Right cardiac atrium (tissue), 5 donors: ENCODE measurements at regions of chr17 and their contacts with region 1.

Region 1: GRCh38 chr17:82351716-82352488 is 7.1 kb upstream of the TEX19 start:
- DNase-seq: peak; percentile 85 to 93 (median 86)
- ATAC-seq: peak; percentile 72 to 87
- H3K4me3 ChIP-seq: no peak overlapping the region
- H3K27ac ChIP-seq: no peak overlapping the region
- H3K4me1 ChIP-seq: no peaks in the 10 kb centered on the region
- H3K27me3 ChIP-seq: no peaks in the 10 kb centered on the region

Region 2: DNA sequence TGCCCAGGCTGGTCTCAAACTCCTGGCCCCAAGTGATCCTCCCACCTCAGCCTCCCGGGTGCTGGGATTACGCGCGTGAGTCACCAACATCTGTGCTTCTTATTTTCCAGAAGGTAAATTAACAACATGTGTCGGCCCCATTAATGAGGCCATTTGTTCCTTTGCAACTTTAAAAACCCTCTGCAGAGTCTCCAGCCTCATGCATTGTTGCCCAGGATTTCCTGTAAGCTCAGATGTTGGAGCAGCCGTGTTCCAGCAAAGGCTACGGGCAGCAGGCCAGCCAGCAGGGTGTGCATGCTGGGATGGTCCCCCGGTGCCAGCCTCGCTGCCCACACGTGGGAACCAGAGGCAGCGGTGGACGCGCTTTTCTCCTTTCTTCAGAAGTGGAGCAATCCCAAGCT is 47.1 kb after region 1 on chr17:
- intact Hi-C with region 1: no loop called
- DNase-seq: peak in 2 of 3 donors; percentile 66 to 70
- ATAC-seq: no peak
- H3K4me3 ChIP-seq: no peak overlapping the region
- H3K27ac ChIP-seq: no peak overlapping the region
- H3K4me1 ChIP-seq: no peaks in the 10 kb centered on the region
- H3K27me3 ChIP-seq: no peaks in the 10 kb centered on the region

Region 3: GRCh38 chr17:82418001-82418986 is 66.4 kb after region 1 on chr17 and contains the starts of genes HEXD and OGFOD3:
- intact Hi-C with region 1: loop called in 3 of 4 experiments (anchors 1 to 10 kb)
- DNase-seq: peak; percentile 84 to 95 (median 94)
- ATAC-seq: peak; percentile 94 to 95
- H3K4me3 ChIP-seq: peak within 1 kb of the TSS; percentile 68
- H3K27ac ChIP-seq: peak within 1 kb of the TSS; percentile 83
- H3K4me1 ChIP-seq: peaks cover 3% of the 10 kb centered on the region
- H3K27me3 ChIP-seq: no peaks in the 10 kb centered on the region
- total RNA-seq, gene HEXD: 13.6 to 24.4 (median 18.7) TPM
- total RNA-seq, gene OGFOD3: 27.9 to 34.0 (median 30.5) TPM

Region 4: GRCh38 chr17:82551779-82552457 is 200.0 kb after region 1 on chr17:
- intact Hi-C with region 1: loop called in 3 of 4 experiments (anchors 2 to 10 kb)
- DNase-seq: peak; percentile 74 to 90 (median 88)
- ATAC-seq: peak; percentile 79 to 86
- H3K4me3 ChIP-seq: no peak overlapping the region
- H3K27ac ChIP-seq: peak overlapping the region; percentile 7
- H3K4me1 ChIP-seq: peaks cover 18% of the 10 kb centered on the region
- H3K27me3 ChIP-seq: no peaks in the 10 kb centered on the region

Region 5: DNA sequence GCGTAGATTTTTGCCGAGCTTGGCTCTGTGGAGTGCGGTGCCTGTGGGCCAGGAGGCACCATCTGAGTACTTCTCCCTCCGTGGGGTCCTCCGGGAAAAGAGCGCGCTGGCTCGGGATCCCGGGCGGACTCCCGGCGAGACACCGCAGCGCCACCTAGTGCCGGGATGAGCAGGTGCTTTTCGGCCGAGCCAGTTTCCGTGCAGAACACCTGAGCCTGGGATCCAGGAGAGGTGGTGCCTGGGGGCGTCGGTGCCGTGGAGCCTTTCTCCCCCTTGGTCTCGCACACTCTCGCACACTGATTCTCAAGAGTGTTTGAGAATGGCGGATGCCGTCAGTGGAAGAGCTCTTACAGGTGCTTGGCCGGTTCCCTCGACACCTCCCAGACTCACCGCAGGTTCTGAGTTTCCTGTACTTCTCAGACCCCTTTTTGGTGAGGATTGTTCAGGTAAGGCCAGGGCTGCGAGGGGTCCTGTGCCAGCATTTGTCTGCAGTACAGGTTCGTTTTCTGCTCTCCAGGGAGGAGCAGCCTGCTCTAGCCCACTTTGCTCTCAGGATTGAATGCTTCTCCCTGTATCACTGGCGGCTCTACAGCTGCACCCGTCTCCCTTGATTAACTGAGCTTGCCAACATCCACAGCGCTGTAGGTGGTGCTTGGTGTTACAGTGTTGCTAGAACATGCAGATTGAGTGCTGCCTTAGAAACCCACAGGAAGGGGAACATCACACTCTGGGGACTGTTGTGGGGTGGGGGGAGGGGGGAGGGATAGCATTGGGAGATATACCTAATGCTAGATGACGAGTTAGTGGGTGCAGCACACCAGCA is 423.3 kb after region 1 on chr17:
- intact Hi-C with region 1: loop called in 1 of 4 experiments (anchors 10 kb)
- DNase-seq: peak; percentile 73 to 90 (median 88)
- ATAC-seq: peak; percentile 44 to 60
- H3K4me3 ChIP-seq: no peak overlapping the region
- H3K27ac ChIP-seq: no peak overlapping the region
- H3K4me1 ChIP-seq: no peaks in the 10 kb centered on the region
- H3K27me3 ChIP-seq: no peaks in the 10 kb centered on the region